GM12878 (cell line): ENCODE measurements at regions of chr3 and their contacts with region 1.

Region 1: DNA sequence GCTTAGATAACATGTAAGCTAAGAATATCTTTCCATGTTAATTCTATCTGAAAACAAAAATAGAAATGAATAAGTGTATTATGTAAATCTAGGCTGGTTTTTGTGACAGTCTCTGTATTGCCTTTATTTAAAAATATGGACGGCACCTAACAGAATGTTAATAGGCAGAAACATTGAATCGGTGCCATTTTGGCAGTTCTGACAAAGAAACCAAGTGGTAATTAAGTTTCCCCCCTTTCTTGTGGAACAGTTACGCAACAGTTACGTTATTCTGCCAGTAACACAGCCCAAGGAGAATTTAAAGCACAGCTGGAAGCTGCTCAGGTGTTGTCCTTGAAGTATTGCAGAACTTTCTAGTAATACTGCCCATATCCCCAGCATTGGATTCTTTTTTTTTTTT is 21.5 kb downstream of the LARS2 start:
- DNase-seq: no peak
- ATAC-seq: no peak
- H3K4me3 ChIP-seq: no peak overlapping the region
- H3K27ac ChIP-seq: no peak overlapping the region
- H3K4me1 ChIP-seq: peaks cover 7% of the 10 kb centered on the region
- H3K27me3 ChIP-seq: no peaks in the 10 kb centered on the region
- CTCF ChIP-seq: no peak
- EP300 ChIP-seq: no peak
- POLR2A ChIP-seq: no peak
- RAD21 ChIP-seq: no peak

Region 2: DNA sequence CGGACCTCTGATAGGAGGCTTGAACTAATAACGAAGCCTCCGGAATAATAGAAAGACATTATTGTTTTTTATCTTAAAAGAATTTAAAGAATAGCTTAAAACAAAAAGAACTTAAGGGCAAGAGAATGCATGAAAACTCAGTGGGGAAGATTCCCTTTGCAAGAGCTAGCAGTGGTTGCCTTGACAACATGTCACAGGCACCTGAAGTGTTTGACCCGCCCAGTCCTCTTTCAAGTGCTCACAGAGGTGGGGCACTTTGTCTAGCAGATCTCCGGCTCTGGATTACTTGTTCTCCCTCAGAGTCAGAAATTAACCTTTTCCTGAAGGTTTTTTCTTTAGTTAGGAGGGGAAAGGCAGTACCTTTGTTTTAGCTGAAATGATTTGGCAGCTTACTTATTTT is 16.2 kb after region 1 on chr3:
- CTCF ChIA-PET with region 1: interaction called, 5 read pairs
- POLR2A ChIA-PET with region 1: no interaction called
- RAD21 ChIA-PET with region 1: no interaction called
- SMC1A ChIA-PET with region 1: interaction called, 10 read pairs
- in situ Hi-C with region 1: no loop called
- intact Hi-C with region 1: no loop called
- DNase-seq: no peak
- ATAC-seq: no peak
- H3K4me3 ChIP-seq: no peak overlapping the region
- H3K27ac ChIP-seq: no peak overlapping the region
- H3K4me1 ChIP-seq: no peaks in the 10 kb centered on the region
- H3K27me3 ChIP-seq: no peaks in the 10 kb centered on the region
- CTCF ChIP-seq: no peak
- EP300 ChIP-seq: no peak
- POLR2A ChIP-seq: no peak
- RAD21 ChIP-seq: no peak